MCF 10A (cell line): ENCODE measurements at regions of chr1 and their contacts with region 1.

Region 1: DNA sequence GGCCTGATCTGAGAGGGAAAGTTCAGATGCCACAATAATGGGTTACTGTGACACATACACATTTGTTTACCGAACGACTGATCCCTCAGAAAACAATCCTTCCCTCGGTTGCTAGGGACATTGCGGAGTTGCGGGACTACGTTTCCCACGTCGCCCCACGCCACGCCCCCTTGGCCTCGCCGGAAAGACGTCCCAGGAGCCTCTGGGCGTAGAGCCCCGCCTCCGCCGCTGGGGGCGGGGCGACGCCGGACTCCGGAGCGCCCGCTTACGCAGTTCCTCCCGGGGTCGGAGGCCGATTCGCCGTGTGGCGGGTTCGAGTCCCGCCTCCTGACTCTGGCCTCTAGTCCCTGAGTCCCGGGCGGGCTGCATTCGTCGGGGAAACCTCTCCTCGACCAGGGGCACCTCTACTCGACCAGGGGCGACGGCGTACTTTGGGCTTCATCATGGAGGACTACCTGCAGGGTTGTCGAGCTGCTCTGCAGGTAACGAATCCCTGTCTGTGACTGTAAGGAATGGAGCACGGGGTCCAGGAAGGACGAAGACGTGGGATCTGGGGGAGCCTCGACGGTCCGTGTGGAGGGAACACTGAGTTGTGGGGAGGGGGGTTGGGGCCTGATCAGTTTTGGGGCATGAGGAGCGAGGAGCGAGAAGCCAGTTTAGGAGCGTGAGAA is at the start of gene PRUNE1:
- DNase-seq: peak; percentile 97
- H3K4me3 Mint-ChIP-seq: peak within 1 kb of the TSS; percentile 94
- H3K27ac Mint-ChIP-seq: peak within 1 kb of the TSS; percentile 99
- H3K4me1 Mint-ChIP-seq: peaks cover 35% of the 10 kb centered on the region
- H3K27me3 Mint-ChIP-seq: no peaks in the 10 kb centered on the region
- CTCF ChIP-seq: no peak
- total RNA-seq, gene PRUNE1: 17.6 and 24.1 TPM in 2 replicates

Region 2: GRCh38 chr1:150955280-150955679 is 53.0 kb before region 1 on chr1:
- CTCF ChIA-PET with region 1: interaction called, 19 read pairs
- POLR2A ChIA-PET with region 1: interaction called, 3 read pairs
- intact Hi-C with region 1: no loop called
- DNase-seq: no peak
- H3K4me3 Mint-ChIP-seq: no peak overlapping the region
- H3K27ac Mint-ChIP-seq: no peak overlapping the region
- H3K4me1 Mint-ChIP-seq: no peaks in the 10 kb centered on the region
- H3K27me3 Mint-ChIP-seq: no peaks in the 10 kb centered on the region
- CTCF ChIP-seq: no peak

Region 3: GRCh38 chr1:150979092-150980056 is 29.0 kb before region 1 on chr1:
- CTCF ChIA-PET with region 1: interaction called, 85 read pairs
- POLR2A ChIA-PET with region 1: interaction called, 43 read pairs
- intact Hi-C with region 1: loop called (anchors 1 kb)
- DNase-seq: peak; percentile 95
- H3K4me3 Mint-ChIP-seq: no peak overlapping the region
- H3K27ac Mint-ChIP-seq: no peak overlapping the region
- H3K4me1 Mint-ChIP-seq: peaks cover 32% of the 10 kb centered on the region
- H3K27me3 Mint-ChIP-seq: no peaks in the 10 kb centered on the region
- CTCF ChIP-seq: peak; percentile 100

Region 4: GRCh38 chr1:150995896-150996295 is 12.4 kb before region 1 on chr1:
- CTCF ChIA-PET with region 1: interaction called, 113 read pairs
- POLR2A ChIA-PET with region 1: interaction called, 61 read pairs
- intact Hi-C with region 1: no loop called
- DNase-seq: peak; percentile 56
- H3K4me3 Mint-ChIP-seq: no peak overlapping the region
- H3K27ac Mint-ChIP-seq: no peak overlapping the region
- H3K4me1 Mint-ChIP-seq: peaks cover 5% of the 10 kb centered on the region
- H3K27me3 Mint-ChIP-seq: no peaks in the 10 kb centered on the region
- CTCF ChIP-seq: peak; percentile 96

Region 5: DNA sequence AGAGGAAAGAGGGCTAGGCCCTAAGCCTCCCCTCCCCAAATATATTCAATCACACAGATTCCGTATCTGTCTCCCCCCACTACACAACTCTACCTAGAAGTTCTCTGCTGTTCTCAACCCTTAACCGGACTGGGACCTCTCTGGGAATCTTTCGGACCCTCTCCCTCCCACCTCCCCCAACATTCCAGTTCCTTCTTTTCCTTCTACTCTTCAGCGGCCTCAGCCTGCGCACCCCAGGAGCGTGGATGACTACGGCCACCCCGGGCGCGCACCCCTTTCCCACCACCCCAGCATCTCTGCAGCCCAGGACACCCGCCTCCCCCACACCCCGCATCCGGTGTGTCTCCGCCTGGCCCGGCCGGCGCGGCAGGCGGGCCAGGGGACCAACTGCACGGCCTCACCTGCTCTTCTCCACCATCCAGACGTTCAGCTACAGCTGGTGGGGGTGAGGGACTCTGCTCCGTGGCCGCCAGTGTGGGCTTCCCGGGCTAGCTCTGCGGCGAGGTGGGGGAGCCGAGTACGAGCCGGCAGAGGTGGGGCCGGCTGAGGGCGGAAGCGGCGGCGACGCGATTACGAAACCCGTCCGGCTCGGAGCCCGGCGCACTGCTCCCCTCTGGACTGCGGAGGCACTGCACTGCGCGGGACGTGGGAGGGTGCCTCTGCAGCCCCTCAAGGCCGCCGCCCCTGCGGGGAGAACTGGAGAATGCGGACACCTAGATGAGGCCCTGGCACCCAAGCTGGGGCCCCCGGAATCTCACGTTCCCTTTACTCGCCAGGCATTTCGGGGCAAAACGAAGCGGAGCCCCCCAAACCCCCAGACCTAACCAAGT is 51.0 kb after region 1 on chr1 and contains the start of gene CDC42SE1:
- CTCF ChIA-PET with region 1: interaction called, 11 read pairs
- POLR2A ChIA-PET with region 1: interaction called, 56 read pairs
- intact Hi-C with region 1: loop called (anchors 5 kb)
- DNase-seq: peak; percentile 85
- H3K4me3 Mint-ChIP-seq: peak within 1 kb of the TSS; percentile 82
- H3K27ac Mint-ChIP-seq: peak within 1 kb of the TSS; percentile 92
- H3K4me1 Mint-ChIP-seq: peaks cover 61% of the 10 kb centered on the region
- H3K27me3 Mint-ChIP-seq: no peaks in the 10 kb centered on the region
- CTCF ChIP-seq: peak; percentile 91
- total RNA-seq, gene CDC42SE1: 134 and 139 TPM in 2 replicates

Region 6: DNA sequence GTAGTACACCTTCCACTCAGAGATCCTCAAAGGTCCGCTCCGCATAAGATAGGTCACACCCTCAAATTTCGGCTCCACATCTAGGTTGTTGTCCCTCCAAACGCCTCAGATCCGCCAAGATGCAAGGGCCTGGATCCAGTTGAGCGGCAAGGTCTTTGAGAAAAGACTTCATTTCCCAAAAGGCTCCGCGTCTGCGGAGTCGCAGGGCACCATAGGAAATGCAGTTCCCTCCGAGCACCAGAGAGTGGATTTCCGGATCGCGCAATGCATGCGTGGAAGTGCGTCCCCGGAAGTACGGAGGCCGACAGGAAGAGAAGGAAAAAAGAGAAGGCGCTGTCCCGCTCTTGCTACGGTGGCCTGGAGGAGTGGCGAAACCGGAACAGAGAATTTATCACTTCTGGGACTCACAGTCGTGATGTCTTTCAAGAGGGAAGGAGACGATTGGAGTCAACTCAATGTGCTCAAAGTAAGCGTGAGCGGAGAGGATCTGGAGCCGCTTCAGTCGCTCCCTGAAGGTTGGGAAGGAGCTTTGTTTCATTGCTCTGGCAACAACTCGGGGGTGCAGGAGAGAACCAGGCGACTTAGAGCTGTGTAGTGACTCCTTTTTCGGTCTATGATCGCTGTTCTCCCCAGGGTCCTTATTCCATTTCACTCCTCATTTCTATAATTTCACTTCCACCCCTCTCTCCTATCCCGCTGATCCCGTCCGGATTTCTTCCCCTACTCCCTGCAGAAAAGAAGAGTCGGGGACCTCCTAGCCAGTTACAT is 157.6 kb after region 1 on chr1 and contains the starts of genes LYSMD1 and SCNM1:
- CTCF ChIA-PET with region 1: no interaction called
- POLR2A ChIA-PET with region 1: interaction called, 20 read pairs
- intact Hi-C with region 1: no loop called
- DNase-seq: peak; percentile 100
- H3K4me3 Mint-ChIP-seq: peak within 1 kb of the TSS; percentile 87
- H3K27ac Mint-ChIP-seq: peak within 1 kb of the TSS; percentile 97
- H3K4me1 Mint-ChIP-seq: peaks cover 25% of the 10 kb centered on the region
- H3K27me3 Mint-ChIP-seq: no peaks in the 10 kb centered on the region
- CTCF ChIP-seq: no peak
- total RNA-seq, gene LYSMD1: 14.4 and 22.3 TPM in 2 replicates
- total RNA-seq, gene SCNM1: 88.5 and 93.0 TPM in 2 replicates

Region 7: GRCh38 chr1:151227634-151228033 is 219.3 kb after region 1 on chr1:
- CTCF ChIA-PET with region 1: no interaction called
- POLR2A ChIA-PET with region 1: no interaction called
- intact Hi-C with region 1: no loop called
- DNase-seq: no peak
- H3K4me3 Mint-ChIP-seq: no peak overlapping the region
- H3K27ac Mint-ChIP-seq: no peak overlapping the region
- H3K4me1 Mint-ChIP-seq: peaks cover 6% of the 10 kb centered on the region
- H3K27me3 Mint-ChIP-seq: no peaks in the 10 kb centered on the region
- CTCF ChIP-seq: no peak